ENCODE measurements at regions of chr20 and their contacts with region 1.

Region 1: DNA sequence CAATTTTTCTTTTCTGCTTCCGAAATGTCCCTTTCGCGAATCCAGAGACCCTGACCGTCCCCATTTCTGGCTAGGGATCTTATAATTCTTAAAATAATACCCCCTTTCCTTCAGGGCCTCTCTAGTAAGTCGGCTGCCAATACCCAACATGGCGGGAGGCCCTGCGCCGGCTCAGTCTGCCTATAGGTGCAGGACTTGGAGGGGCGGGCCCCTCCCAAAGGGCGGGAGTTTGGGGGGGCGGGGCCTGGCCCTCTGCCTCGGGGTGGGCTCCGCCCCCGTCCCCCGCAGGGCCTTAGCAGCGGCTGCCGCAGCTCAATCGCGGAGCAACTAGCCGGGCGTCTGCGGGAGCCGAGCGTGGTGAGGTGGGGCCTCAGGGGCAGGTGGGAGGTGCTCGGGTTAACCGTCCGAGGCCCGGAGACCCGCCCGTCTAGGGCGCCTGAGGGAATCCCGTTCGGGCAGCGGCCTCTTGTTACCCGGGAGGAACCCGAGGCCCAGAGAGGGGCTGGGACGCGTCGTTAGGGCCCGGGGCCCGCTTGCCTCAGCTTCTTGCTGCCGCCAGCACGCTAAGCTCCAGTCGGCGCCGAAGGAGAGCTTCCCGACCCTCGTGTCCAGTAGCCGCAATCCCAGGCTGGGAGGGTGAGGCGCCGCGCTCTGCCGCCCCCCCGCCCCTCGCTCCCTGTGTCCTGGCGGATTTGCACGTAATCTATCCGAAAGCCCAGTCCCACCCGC is at the start of gene CEP250:
- DNase-seq: peak; percentile 94
- H3K4me3 Mint-ChIP-seq: peak within 1 kb of the TSS; percentile 84
- H3K27ac Mint-ChIP-seq: peak within 1 kb of the TSS; percentile 99
- H3K4me1 Mint-ChIP-seq: peaks cover 24% of the 10 kb centered on the region
- H3K27me3 Mint-ChIP-seq: no peaks in the 10 kb centered on the region
- CTCF ChIP-seq: no peak
- total RNA-seq, gene CEP250: 41.0 and 44.0 TPM in 2 replicates

Region 2: DNA sequence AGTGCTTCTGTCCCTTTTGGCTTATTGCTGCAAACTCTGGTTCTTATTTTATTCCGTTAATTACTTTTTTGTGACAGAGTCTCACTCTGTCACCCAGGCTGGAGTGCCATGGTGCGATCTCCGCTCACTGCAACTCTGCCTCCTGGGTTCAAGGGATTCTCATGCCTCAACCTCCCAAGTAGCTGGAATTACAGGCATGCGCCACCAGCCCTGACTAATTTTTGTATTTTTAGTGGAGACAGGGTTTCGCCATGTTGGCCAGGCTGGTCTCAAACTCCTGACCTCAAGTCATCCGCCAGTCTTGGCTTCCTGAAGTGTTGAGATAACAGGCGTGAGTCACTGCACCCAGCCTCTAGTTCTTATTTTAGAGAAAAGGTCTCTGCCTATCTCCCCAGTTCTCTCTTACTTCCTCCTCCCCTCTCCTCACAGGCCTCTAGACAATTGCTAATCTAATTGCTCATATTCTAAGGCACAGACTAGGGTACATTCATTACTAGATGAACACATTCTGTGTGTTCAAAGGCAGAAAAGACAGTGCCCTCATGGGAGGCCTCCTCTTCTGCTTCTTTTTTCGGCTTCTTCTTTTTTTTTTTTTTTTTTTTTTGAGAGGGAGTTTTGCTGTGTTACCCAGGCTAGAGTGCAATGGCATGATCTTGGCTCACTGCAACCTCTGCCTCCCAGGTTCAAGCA is 334.9 kb before region 1 on chr20:
- CTCF ChIA-PET with region 1: no interaction called
- POLR2A ChIA-PET with region 1: no interaction called
- intact Hi-C with region 1: no loop called
- DNase-seq: no peak
- H3K4me3 Mint-ChIP-seq: no peak overlapping the region
- H3K27ac Mint-ChIP-seq: no peak overlapping the region
- H3K4me1 Mint-ChIP-seq: no peaks in the 10 kb centered on the region
- H3K27me3 Mint-ChIP-seq: no peaks in the 10 kb centered on the region
- CTCF ChIP-seq: no peak

Region 3: GRCh38 chr20:35277531-35278395 is 177.3 kb before region 1 on chr20 and contains the start of gene MMP24OS:
- CTCF ChIA-PET with region 1: interaction called, 3 read pairs
- POLR2A ChIA-PET with region 1: interaction called, 33 read pairs
- intact Hi-C with region 1: no loop called
- DNase-seq: peak; percentile 86
- H3K4me3 Mint-ChIP-seq: peak within 1 kb of the TSS; percentile 98
- H3K27ac Mint-ChIP-seq: peak within 1 kb of the TSS; percentile 87
- H3K4me1 Mint-ChIP-seq: peaks cover 26% of the 10 kb centered on the region
- H3K27me3 Mint-ChIP-seq: no peaks in the 10 kb centered on the region
- CTCF ChIP-seq: no peak
- total RNA-seq, gene MMP24OS: 43.2 and 52.2 TPM in 2 replicates

Region 4: GRCh38 chr20:35284267-35284991 is 170.6 kb before region 1 on chr20 and contains the start of gene EIF6:
- CTCF ChIA-PET with region 1: interaction called, 3 read pairs
- POLR2A ChIA-PET with region 1: interaction called, 33 read pairs
- intact Hi-C with region 1: no loop called
- DNase-seq: peak; percentile 86
- H3K4me3 Mint-ChIP-seq: peak within 1 kb of the TSS; percentile 89
- H3K27ac Mint-ChIP-seq: peak within 1 kb of the TSS; percentile 90
- H3K4me1 Mint-ChIP-seq: peaks cover 25% of the 10 kb centered on the region
- H3K27me3 Mint-ChIP-seq: no peaks in the 10 kb centered on the region
- CTCF ChIP-seq: no peak
- total RNA-seq, gene EIF6: 322 and 354 TPM in 2 replicates

Region 5: DNA sequence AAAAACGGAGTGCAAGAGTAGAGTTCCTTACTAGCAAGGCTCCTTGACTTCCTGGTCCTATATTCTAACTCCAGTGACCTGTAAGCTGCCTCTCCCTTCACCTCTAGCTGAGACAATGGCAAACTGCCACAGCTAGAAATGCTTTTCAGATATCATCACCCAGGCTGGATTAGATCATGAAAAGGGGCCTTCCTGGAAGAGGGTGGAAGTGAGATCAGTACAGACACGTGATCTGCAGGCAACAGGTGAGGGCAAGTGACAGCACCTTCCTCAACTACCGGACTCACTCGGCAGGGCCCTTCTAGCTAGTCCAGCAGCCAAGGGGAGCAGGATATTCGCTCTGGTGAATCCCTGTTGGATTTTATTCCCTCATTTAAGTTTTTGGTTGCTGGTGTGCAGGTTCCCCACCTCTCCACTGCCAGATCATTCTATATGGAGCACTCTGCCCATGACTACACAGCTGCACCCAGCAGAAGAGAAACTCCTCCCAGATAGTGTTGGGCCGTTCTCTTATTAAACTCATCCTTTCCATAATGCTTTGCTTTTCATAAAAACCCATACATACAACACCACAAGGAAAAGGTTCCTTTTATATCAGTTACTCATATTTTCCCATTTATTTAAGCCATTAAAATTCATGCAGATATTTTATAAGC is 136.4 kb before region 1 on chr20:
- CTCF ChIA-PET with region 1: interaction called, 374 read pairs
- POLR2A ChIA-PET with region 1: interaction called, 17 read pairs
- intact Hi-C with region 1: no loop called
- DNase-seq: peak; percentile 94
- H3K4me3 Mint-ChIP-seq: peak overlapping the region; percentile 16
- H3K27ac Mint-ChIP-seq: peak overlapping the region; percentile 87
- H3K4me1 Mint-ChIP-seq: peaks cover 48% of the 10 kb centered on the region
- H3K27me3 Mint-ChIP-seq: no peaks in the 10 kb centered on the region
- CTCF ChIP-seq: no peak

Region 6: DNA sequence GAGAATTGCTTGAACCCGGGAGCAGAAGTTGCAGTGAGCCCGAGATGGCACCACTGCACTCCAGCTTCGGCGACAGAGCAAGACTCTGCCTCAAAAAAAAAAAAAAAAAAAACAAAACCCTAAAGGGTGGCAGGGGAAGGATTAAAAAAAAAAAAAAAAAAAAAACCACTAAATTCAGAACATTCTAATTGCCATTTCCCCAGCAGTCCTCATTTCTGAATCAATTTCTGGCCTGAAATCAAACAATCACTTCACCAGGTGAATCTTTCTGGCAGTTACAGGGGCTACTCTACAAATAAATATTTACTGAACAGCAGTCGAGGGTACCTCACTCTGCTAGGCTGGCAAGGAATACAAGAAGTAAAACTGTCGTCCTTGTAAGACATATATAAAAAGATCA is 44.4 kb before region 1 on chr20:
- CTCF ChIA-PET with region 1: interaction called, 4 read pairs
- POLR2A ChIA-PET with region 1: interaction called, 22 read pairs
- intact Hi-C with region 1: no loop called
- DNase-seq: no peak
- H3K4me3 Mint-ChIP-seq: peak overlapping the region; percentile 99
- H3K27ac Mint-ChIP-seq: peak overlapping the region; percentile 99
- H3K4me1 Mint-ChIP-seq: peaks cover 7% of the 10 kb centered on the region
- H3K27me3 Mint-ChIP-seq: no peaks in the 10 kb centered on the region
- CTCF ChIP-seq: no peak

Region 7: DNA sequence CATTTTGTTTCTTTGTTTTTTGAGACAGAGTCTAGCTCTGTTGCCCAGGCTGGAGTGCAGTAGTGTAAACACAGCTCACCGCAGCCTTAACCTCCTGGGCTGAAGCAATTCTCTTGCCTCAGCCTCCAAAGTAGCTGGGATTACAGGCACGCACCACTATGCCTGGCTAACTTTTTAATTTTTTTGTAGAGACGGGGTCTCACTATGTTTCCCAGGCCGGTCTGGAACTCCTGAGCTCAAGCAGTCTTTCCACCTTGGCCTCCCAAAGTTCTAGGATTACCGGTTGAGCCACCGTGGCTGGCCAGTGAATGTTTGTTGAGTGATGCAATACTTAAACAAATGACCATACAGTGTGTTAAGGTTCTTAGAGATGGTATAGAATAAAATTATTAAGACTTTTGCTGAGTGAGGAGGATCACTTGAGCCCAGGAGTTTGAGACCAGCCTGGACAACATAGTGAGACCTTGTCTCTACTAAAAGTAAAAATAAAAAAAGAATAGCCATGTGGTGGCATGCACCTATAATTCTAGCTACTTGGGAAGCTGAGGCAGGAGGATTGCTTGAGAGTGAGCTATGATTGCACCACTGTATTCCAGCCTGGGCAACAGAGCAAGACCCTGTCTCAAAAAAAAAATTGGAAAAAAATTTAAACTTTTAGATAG is 13.8 kb after region 1 on chr20:
- CTCF ChIA-PET with region 1: interaction called, 18 read pairs
- POLR2A ChIA-PET with region 1: interaction called, 15 read pairs
- intact Hi-C with region 1: no loop called
- DNase-seq: no peak
- H3K4me3 Mint-ChIP-seq: no peak overlapping the region
- H3K27ac Mint-ChIP-seq: no peak overlapping the region
- H3K4me1 Mint-ChIP-seq: peaks cover 8% of the 10 kb centered on the region
- H3K27me3 Mint-ChIP-seq: no peaks in the 10 kb centered on the region
- CTCF ChIP-seq: no peak

Region 8: GRCh38 chr20:35664544-35665221 is 209.6 kb after region 1 on chr20 and contains the starts of genes CPNE1 and RBM12:
- CTCF ChIA-PET with region 1: no interaction called
- POLR2A ChIA-PET with region 1: interaction called, 23 read pairs
- intact Hi-C with region 1: no loop called
- DNase-seq: peak; percentile 90
- H3K4me3 Mint-ChIP-seq: peak within 1 kb of the TSS; percentile 94
- H3K27ac Mint-ChIP-seq: peak within 1 kb of the TSS; percentile 98
- H3K4me1 Mint-ChIP-seq: peaks cover 19% of the 10 kb centered on the region
- H3K27me3 Mint-ChIP-seq: no peaks in the 10 kb centered on the region
- CTCF ChIP-seq: no peak
- total RNA-seq, gene CPNE1: 161 and 194 TPM in 2 replicates
- total RNA-seq, gene RBM12: 60.1 and 64.3 TPM in 2 replicates

Measured in MCF 10A (cell line).